Posterior vena cava (tissue), 2 donors: ENCODE measurements at regions of chr16 and their contacts with region 1.

Region 1: GRCh38 chr16:84881702-84882521 is 62.1 kb downstream of the CRISPLD2 start:
- DNase-seq: no peak

Region 2: GRCh38 chr16:84585886-84586285 is 296.0 kb before region 1 on chr16:
- intact Hi-C with region 1: no loop called
- DNase-seq: no peak

Region 3: DNA sequence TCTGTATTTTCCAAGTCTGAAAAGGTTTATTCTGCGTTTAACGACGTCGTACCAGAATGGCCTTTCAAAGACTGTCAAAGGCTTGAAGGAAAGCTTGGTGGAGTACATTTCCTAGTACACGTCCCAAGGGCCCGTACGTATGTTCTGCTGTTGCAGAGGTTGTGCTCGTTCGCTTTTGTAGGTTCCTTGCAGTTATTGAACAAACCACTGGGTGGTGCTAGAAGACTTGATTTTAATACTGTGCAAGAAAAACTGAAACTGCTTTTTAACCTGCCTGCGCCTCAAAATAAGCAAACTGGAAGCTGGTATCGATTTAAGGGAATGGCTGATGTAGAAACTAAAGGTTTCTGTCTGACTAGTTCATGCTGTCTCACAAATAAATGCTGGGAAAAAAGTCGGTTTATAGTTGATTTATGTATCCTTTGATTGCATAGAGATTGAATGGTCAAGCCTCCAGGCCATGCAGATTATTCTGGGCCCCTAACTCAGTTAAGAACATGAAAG is 127.5 kb before region 1 on chr16:
- intact Hi-C with region 1: no loop called
- DNase-seq: no peak

Region 4: GRCh38 chr16:84774810-84775209 is 107.1 kb before region 1 on chr16:
- intact Hi-C with region 1: no loop called
- DNase-seq: no peak

Region 5: GRCh38 chr16:84819644-84820324 is 62.1 kb before region 1 on chr16 and contains the start of gene CRISPLD2:
- intact Hi-C with region 1: loop called in 1 of 2 experiments (anchors 2 kb)
- DNase-seq: peak; percentile 99
- total RNA-seq, gene CRISPLD2: 259 to 311 TPM

Region 6: GRCh38 chr16:84905966-84906460 is 24.1 kb after region 1 on chr16:
- intact Hi-C with region 1: loop called in 1 of 2 experiments (anchors 1 kb)
- DNase-seq: no peak

Region 7: DNA sequence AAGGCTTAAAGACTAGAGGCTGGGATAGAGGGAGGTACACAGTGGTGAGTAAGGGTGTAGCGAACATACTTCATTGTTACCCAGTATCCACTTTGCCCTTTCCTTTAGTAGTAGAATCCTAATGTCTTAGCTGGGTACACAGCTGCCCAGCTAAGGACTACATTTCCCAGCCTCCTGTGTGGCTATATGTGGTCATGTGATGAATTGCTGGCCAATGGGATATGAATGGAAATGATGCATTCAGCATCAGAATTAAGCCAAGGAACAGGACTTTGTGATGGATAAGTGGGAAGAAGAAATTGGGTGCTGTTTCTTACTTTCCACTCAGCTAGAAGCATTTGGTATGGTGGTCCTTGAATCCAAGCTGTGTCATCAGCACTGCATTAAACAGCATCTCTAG is 1752.4 kb after region 1 on chr16:
- intact Hi-C with region 1: no loop called
- DNase-seq: no peak